Activated CD8-positive, alpha-beta T cell treated with anti-CD3 and anti-CD28 coated beads, Interleukin-2, amount 10 ng/mL, durations not matched to agents 7 days and 5 days (primary cell): ENCODE measurements at regions of chr12 and their contacts with region 1.

Region 1: DNA sequence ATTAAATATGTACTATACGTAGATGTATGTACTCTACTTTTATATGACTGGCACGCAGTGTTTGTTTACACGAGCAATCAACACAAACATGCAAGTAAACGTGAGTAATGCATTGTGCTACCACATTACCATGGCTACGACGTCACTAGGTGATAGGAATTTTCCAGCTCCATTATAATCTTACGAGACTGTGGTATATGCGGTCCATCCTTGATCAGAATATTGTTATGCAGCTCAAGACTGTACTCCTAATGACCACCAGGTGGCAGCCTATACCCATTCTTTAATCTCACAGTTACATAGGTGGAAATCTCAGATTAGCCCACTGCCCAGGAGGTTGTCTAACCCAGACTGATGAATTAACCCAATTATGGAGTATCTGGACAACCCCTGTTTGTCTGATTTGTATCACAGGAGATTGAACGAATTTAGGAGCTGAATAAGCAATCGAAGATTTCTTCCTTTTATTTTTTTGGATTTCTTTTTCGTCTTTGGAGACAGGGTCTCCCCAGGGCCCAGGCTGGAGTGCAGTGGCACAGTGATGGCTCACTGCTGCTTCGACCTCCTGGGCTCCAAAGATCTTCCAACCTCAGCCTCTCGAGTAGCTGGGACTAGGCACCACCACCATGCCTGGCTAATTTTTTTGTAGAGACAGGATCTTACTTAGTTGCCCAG is 8.7 kb upstream of the TESPA1 start:
- DNase-seq: peak; percentile 77
- ATAC-seq: peak; percentile 66
- H3K4me3 Mint-ChIP-seq: no peak overlapping the region
- H3K27ac Mint-ChIP-seq: no peak overlapping the region
- H3K4me1 Mint-ChIP-seq: peaks cover 36% of the 10 kb centered on the region
- H3K27me3 Mint-ChIP-seq: no peaks in the 10 kb centered on the region

Region 2: GRCh38 chr12:54701940-54702592 is 291.2 kb before region 1 on chr12:
- CTCF ChIA-PET with region 1: interaction called, 19 read pairs
- POLR2A ChIA-PET with region 1: no interaction called
- DNase-seq: peak; percentile 46
- ATAC-seq: peak; percentile 64
- H3K4me3 Mint-ChIP-seq: no peak overlapping the region
- H3K27ac Mint-ChIP-seq: no peak overlapping the region
- H3K4me1 Mint-ChIP-seq: no peaks in the 10 kb centered on the region
- H3K27me3 Mint-ChIP-seq: peaks cover 16% of the 10 kb centered on the region

Region 3: GRCh38 chr12:54740882-54741281 is 252.4 kb before region 1 on chr12:
- CTCF ChIA-PET with region 1: interaction called, 19 read pairs
- POLR2A ChIA-PET with region 1: no interaction called
- DNase-seq: no peak
- ATAC-seq: peak; percentile 80
- H3K4me3 Mint-ChIP-seq: peak overlapping the region; percentile 32
- H3K27ac Mint-ChIP-seq: peak overlapping the region; percentile 80
- H3K4me1 Mint-ChIP-seq: peaks cover 74% of the 10 kb centered on the region
- H3K27me3 Mint-ChIP-seq: peaks cover 3% of the 10 kb centered on the region

Region 4: GRCh38 chr12:54935235-54935951 is 57.9 kb before region 1 on chr12:
- CTCF ChIA-PET with region 1: interaction called, 13 read pairs
- POLR2A ChIA-PET with region 1: interaction called, 3 read pairs
- DNase-seq: peak; percentile 67
- ATAC-seq: peak; percentile 91
- H3K4me3 Mint-ChIP-seq: peak overlapping the region; percentile 36
- H3K27ac Mint-ChIP-seq: peak overlapping the region; percentile 97
- H3K4me1 Mint-ChIP-seq: peaks cover 54% of the 10 kb centered on the region
- H3K27me3 Mint-ChIP-seq: no peaks in the 10 kb centered on the region

Region 5: GRCh38 chr12:54967461-54967860 is 25.8 kb before region 1 on chr12:
- CTCF ChIA-PET with region 1: interaction called, 17 read pairs
- POLR2A ChIA-PET with region 1: no interaction called
- DNase-seq: no peak
- ATAC-seq: peak; percentile 35
- H3K4me3 Mint-ChIP-seq: no peak overlapping the region
- H3K27ac Mint-ChIP-seq: peak overlapping the region; percentile 84
- H3K4me1 Mint-ChIP-seq: peaks cover 36% of the 10 kb centered on the region
- H3K27me3 Mint-ChIP-seq: no peaks in the 10 kb centered on the region

Region 6: GRCh38 chr12:55037351-55037987 is 44.2 kb after region 1 on chr12:
- CTCF ChIA-PET with region 1: interaction called, 15 read pairs
- POLR2A ChIA-PET with region 1: no interaction called
- DNase-seq: no peak
- ATAC-seq: no peak
- H3K4me3 Mint-ChIP-seq: no peak overlapping the region
- H3K27ac Mint-ChIP-seq: peak overlapping the region; percentile 10
- H3K4me1 Mint-ChIP-seq: peaks cover 28% of the 10 kb centered on the region
- H3K27me3 Mint-ChIP-seq: peaks cover 2% of the 10 kb centered on the region

Region 7: DNA sequence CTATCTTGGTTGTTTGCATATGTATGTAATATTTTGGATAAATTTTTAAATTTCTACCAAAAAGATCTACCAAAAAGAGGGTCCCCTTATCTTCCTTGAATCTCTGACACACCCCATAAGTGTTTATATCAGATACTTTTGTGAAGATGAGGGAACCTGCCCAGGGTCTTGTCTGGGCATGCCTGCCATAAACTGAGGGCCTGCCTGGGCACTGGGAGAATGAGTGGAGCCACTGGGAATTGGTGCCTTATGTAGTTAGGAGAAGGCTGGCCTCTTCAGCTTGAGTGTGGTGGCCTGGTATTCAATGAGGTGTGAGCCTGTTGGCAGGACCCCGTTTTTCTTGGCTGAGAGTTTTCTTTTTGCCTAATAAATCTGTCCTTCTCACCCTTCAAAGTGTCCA is 179.4 kb after region 1 on chr12:
- CTCF ChIA-PET with region 1: no interaction called
- POLR2A ChIA-PET with region 1: no interaction called
- DNase-seq: no peak
- ATAC-seq: no peak
- H3K4me3 Mint-ChIP-seq: no peak overlapping the region
- H3K27ac Mint-ChIP-seq: no peak overlapping the region
- H3K4me1 Mint-ChIP-seq: no peaks in the 10 kb centered on the region
- H3K27me3 Mint-ChIP-seq: peaks cover 9% of the 10 kb centered on the region

Region 8: GRCh38 chr12:55188974-55189556 is 195.8 kb after region 1 on chr12:
- CTCF ChIA-PET with region 1: no interaction called
- POLR2A ChIA-PET with region 1: no interaction called
- DNase-seq: peak; percentile 72
- ATAC-seq: peak; percentile 69
- H3K4me3 Mint-ChIP-seq: no peak overlapping the region
- H3K27ac Mint-ChIP-seq: no peak overlapping the region
- H3K4me1 Mint-ChIP-seq: no peaks in the 10 kb centered on the region
- H3K27me3 Mint-ChIP-seq: peaks cover 19% of the 10 kb centered on the region